Activated CD4-positive, alpha-beta T cell treated with anti-CD3 and anti-CD28 coated beads, Interleukin-2, amount 10 ng/mL, durations not matched to agents 24 days and 14 days (primary cell): ENCODE measurements at regions of chr12 and their contacts with region 1.

Region 1: DNA sequence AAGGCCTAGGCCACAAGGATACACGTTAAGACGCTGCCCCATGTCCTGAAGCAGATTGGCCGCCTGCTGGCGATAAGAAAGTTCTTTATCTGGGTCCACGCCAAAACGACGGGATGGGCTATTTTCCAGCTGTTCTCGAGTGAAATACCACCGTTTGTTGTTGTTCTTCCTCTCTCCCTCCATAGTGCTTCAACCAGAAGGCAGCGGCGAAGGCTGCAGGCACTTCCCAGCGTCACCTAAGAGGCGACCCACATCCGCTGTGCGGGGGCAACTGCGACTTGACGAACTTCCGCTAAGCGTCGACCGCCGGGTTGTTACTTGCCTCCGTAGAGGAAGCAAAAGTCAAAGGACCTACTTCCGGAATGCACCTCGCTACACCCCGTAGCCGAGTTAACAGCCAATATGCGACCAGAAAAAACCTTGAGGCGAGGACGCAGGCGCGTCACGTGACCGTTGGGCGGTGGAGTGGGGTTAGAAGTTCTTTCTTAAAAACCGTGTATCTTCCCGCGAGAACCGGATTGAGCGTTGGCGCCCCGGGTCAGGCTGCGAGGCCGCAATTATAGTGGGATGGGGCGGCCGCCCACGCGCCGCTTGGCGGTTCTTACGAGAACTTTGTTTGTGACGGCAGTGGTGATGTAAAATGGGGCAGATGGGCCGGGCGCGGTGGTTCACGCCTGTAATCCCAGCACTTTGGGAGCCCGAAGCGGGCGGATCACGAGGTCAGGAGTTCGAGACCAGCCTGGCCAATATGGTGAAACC is at the start of gene CCNT1:
- DNase-seq: peak; percentile 99
- H3K4me3 Mint-ChIP-seq: peak within 1 kb of the TSS; percentile 97
- H3K27ac Mint-ChIP-seq: peak within 1 kb of the TSS; percentile 95
- H3K4me1 Mint-ChIP-seq: peaks cover 21% of the 10 kb centered on the region
- H3K27me3 Mint-ChIP-seq: peaks cover 3% of the 10 kb centered on the region
- total RNA-seq, gene CCNT1: 68.7 and 70.9 TPM in 2 replicates

Region 2: GRCh38 chr12:48615681-48616080 is 101.0 kb before region 1 on chr12:
- intact Hi-C with region 1: no loop called
- DNase-seq: no peak
- H3K4me3 Mint-ChIP-seq: no peak overlapping the region
- H3K27ac Mint-ChIP-seq: no peak overlapping the region
- H3K4me1 Mint-ChIP-seq: peaks cover 3% of the 10 kb centered on the region
- H3K27me3 Mint-ChIP-seq: peaks cover 33% of the 10 kb centered on the region

Region 3: GRCh38 chr12:48681738-48682532 is 34.7 kb before region 1 on chr12 and contains the start of gene KANSL2:
- intact Hi-C with region 1: loop called (anchors 1 kb)
- DNase-seq: peak; percentile 99
- H3K4me3 Mint-ChIP-seq: peak within 1 kb of the TSS; percentile 98
- H3K27ac Mint-ChIP-seq: peak within 1 kb of the TSS; percentile 94
- H3K4me1 Mint-ChIP-seq: peaks cover 33% of the 10 kb centered on the region
- H3K27me3 Mint-ChIP-seq: no peaks in the 10 kb centered on the region
- total RNA-seq, gene KANSL2: 61.3 and 66.5 TPM in 2 replicates

Region 4: DNA sequence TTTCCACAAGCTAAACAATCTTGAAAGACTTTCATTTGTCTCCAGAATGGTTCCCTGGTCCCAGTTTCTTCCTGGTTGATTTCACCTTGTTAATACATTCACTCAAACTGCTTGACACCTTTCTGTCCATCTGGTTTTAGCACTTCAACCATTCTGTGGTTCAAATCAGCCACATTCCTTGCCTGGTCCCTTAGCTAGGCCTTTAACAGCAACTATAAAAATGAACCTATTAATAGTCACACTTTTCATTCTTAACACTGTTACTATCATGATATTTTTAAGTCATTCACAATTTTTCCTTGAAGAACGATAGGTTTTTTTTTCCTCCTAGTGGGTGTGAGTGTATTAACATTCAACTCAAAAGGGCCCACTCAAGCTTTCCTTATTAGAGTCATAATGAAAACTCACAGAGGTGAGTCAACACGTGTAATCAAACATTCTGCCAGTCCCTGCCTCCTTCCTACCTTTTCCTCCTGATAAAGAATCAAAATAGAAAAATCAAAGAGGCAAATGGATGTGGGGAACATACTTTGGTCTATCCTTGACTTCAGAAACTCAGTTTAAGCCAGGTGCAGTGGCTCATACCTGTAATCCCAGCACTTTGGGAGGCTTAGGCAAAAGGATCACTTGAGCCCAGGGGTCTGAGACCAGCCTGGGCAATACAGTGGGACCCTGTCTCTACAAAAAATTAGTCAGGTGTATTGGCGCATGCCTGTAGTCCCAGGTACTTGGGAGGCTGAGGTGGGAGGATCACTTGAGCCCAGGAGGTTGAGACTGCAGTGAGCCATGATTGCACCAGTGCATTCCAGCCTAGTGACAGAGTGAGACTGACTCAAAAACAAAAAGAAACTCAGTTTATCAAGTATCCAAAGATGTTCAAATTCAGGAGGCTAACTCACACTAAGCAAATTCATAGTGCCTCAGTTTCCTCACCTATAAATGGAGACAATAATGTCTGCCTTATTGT is 34.4 kb after region 1 on chr12:
- intact Hi-C with region 1: loop called (anchors 2 kb)
- DNase-seq: no peak
- H3K4me3 Mint-ChIP-seq: no peak overlapping the region
- H3K27ac Mint-ChIP-seq: peak overlapping the region; percentile 62
- H3K4me1 Mint-ChIP-seq: peaks cover 14% of the 10 kb centered on the region
- H3K27me3 Mint-ChIP-seq: peaks cover 14% of the 10 kb centered on the region

Region 5: DNA sequence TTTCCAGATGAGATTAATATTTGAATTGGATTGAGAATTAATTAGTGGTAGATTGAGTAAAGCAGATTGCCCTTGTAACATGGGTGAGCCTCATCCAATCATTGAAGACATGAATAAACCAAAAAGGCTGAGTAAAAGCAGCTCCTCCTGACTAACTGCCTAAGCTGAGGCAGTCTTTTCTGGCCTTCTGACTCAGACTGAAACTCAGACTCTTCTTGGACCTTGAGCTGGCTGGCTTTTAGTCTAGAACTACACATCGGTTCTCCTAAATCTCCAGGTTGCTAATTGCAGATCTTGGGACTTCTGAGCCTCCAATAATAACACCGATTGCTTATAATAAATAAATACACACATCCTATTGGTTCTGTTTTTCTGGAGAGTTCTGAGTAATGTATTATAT is 184.6 kb after region 1 on chr12:
- intact Hi-C with region 1: no loop called
- DNase-seq: no peak
- H3K4me3 Mint-ChIP-seq: no peak overlapping the region
- H3K27ac Mint-ChIP-seq: no peak overlapping the region
- H3K4me1 Mint-ChIP-seq: peaks cover 12% of the 10 kb centered on the region
- H3K27me3 Mint-ChIP-seq: peaks cover 12% of the 10 kb centered on the region